ENCODE measurements at regions of chr18 and their contacts with region 1.

Region 1: DNA sequence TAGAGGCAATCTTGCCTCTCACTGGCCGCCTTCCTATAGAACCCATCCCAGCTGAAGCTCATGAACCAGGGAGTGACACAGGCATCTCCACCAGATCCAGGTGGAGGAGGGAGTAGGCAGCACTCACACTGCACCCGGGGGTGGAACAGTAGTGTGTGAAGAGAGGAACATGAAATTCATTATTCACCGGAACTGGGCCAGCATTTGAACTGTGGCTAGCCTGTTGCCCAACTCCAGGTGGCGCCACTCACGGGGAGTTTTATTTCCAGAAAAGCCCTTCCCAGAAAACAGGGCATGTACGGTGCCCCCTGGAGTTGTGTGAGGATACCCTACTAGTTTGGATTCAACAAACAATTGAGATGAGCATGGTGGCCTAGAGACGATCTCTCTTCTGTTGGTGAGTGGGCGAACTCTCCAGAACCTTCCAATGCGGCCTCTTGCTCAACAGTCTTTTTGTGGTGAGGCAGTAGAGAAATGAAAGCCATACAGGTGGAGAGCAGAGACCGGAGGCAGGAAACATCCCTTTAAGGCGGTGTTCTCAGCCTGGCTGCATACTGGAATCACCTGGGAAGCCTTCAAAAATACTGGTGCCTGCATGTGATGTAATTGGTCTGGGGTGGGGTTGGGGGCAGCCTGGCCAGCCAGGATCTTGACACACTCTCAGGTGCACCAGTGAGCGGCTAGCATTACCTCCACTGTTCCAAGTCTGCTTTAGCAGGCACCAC is 73.5 kb upstream of the NEDD4L start:
- DNase-seq: no peak
- H3K4me3 ChIP-seq: no peak overlapping the region
- H3K27ac ChIP-seq: no peak overlapping the region
- H3K4me1 ChIP-seq: no peaks in the 10 kb centered on the region
- H3K27me3 ChIP-seq: no peaks in the 10 kb centered on the region
- CTCF ChIP-seq: peak; percentile 37 to 46

Region 2: GRCh38 chr18:58124475-58124874 is 154.0 kb after region 1 on chr18:
- CTCF ChIA-PET with region 1: no interaction called
- dilution Hi-C with region 1: no loop called
- in situ Hi-C with region 1: no loop called
- intact Hi-C with region 1: loop called (anchors 5 kb)
- DNase-seq: no peak
- H3K4me3 ChIP-seq: no peak overlapping the region
- H3K27ac ChIP-seq: no peak overlapping the region
- H3K4me1 ChIP-seq: peaks cover 2% of the 10 kb centered on the region
- H3K27me3 ChIP-seq: no peaks in the 10 kb centered on the region
- CTCF ChIP-seq: no peak